Mammary epithelial cell (primary cell): ENCODE measurements at regions of chr1 and their contacts with region 1.

Region 1: DNA sequence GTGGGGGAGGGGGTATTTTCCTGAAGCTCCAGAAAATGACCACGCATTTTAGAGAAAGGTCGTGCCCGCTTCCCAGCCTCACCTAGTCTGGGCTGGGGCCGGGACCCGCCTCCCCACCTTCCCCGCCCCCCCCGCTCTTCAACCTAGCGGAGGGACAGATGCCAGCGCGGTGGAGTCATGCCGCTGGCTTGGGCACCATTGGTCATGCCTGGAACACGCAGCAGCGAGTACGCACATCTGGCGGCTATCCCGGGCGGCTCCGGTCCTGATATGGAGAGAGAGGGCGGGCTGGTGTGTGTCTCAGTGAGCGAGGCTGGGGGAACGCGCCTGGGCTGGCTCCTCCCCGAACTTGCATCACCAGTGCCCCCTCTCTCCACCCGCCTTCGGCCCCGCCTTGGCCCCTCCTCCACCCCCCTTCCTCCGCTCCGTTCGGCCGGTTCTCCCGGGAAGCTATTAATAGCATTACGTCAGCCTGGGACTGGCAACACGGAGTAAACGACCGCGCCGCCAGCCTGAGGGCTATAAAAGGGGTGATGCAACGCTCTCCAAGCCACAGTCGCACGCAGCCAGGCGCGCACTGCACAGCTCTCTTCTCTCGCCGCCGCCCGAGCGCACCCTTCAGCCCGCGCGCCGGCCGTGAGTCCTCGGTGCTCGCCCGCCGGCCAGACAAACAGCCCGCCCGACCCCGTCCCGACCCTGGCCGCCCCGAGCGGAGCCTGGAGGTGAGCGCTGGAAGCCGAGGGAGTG is at the start of gene ATF3:
- DNase-seq: peak; percentile 99
- H3K4me3 ChIP-seq: peak within 1 kb of the TSS; percentile 69 to 76 (median 75)
- H3K27ac ChIP-seq: peak within 1 kb of the TSS; percentile 89
- H3K4me1 ChIP-seq: peaks cover 24% of the 10 kb centered on the region
- H3K27me3 ChIP-seq: no peaks in the 10 kb centered on the region
- CTCF ChIP-seq: no peak
- total RNA-seq, gene ATF3: 3.5 to 17.8 TPM

Region 2: GRCh38 chr1:212488397-212489283 is 119.7 kb before region 1 on chr1:
- CTCF ChIA-PET with region 1: no interaction called
- dilution Hi-C with region 1: loop called (anchors 5 kb)
- in situ Hi-C with region 1: loop called in 1 of 2 experiments (anchors 5 kb)
- intact Hi-C with region 1: loop called (anchors 1 kb)
- DNase-seq: peak; percentile 96
- H3K4me3 ChIP-seq: no peak overlapping the region
- H3K27ac ChIP-seq: peak overlapping the region; percentile 33
- H3K4me1 ChIP-seq: peaks cover 24% of the 10 kb centered on the region
- H3K27me3 ChIP-seq: no peaks in the 10 kb centered on the region
- CTCF ChIP-seq: no peak

Region 3: GRCh38 chr1:212529211-212529741 is 79.1 kb before region 1 on chr1:
- CTCF ChIA-PET with region 1: no interaction called
- dilution Hi-C with region 1: no loop called
- in situ Hi-C with region 1: no loop called
- intact Hi-C with region 1: no loop called
- DNase-seq: peak; percentile 45
- H3K4me3 ChIP-seq: no peak overlapping the region
- H3K27ac ChIP-seq: no peak overlapping the region
- H3K4me1 ChIP-seq: peaks cover 15% of the 10 kb centered on the region
- H3K27me3 ChIP-seq: no peaks in the 10 kb centered on the region
- CTCF ChIP-seq: no peak

Region 4: GRCh38 chr1:212558693-212559480 is 49.5 kb before region 1 on chr1:
- CTCF ChIA-PET with region 1: interaction called, 3 read pairs
- dilution Hi-C with region 1: no loop called
- in situ Hi-C with region 1: no loop called
- intact Hi-C with region 1: loop called (anchors 1 kb)
- DNase-seq: peak; percentile 93
- H3K4me3 ChIP-seq: peak overlapping the region; percentile 59 to 78 (median 59)
- H3K27ac ChIP-seq: peak overlapping the region; percentile 88
- H3K4me1 ChIP-seq: peaks cover 6% of the 10 kb centered on the region
- H3K27me3 ChIP-seq: no peaks in the 10 kb centered on the region
- CTCF ChIP-seq: no peak

Region 5: DNA sequence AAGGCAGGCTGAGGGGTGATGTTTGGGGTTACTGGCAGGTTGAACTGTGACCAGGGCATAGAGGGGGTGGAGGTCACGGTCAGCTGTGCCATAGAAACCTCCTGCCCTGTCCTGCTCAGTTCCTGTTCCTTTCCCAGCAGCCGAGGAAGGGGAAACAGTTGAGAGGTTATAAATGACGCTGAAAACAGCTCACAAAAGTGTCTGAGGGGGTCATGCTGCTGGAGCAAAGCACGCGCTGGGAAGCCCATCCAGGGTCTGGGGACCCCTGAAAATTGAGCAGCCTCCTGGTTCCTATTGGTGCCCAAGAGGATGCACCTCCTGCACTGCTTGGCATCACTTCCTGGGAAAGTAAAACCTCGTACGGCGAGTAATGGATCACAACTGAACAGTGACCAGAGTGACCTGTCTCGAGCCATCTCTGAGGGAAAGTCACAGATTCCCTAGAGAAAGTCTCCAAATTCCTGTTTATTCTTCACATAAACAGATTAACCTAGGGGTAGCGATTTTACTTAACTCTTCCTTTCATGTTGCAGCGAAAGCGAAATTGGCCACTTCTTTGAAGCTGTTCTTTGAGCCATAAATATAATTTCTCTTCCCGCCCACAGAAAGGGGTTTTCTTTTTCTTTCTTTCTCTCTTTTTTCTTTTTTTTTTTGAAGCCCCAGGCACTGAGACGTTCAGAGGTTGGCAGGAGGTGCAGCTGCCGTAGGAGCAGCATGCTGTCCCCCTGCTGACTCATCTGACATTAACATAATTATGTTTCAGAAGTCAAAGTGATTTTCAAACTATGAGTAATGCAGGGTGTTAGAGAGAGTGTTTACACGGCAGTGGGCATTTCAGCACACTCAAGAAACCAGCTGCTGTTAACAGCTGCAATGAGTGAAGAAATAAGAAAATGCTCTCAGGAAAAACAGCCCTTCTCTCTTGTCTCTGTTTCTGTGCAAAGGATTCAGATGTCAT is 41.6 kb before region 1 on chr1:
- CTCF ChIA-PET with region 1: no interaction called
- dilution Hi-C with region 1: no loop called
- in situ Hi-C with region 1: no loop called
- intact Hi-C with region 1: loop called (anchors 2 kb)
- DNase-seq: peak; percentile 82
- H3K4me3 ChIP-seq: peak overlapping the region; percentile 45 to 62 (median 51)
- H3K27ac ChIP-seq: peak overlapping the region; percentile 69
- H3K4me1 ChIP-seq: peaks cover 12% of the 10 kb centered on the region
- H3K27me3 ChIP-seq: peaks cover 2% of the 10 kb centered on the region
- CTCF ChIP-seq: no peak

Region 6: DNA sequence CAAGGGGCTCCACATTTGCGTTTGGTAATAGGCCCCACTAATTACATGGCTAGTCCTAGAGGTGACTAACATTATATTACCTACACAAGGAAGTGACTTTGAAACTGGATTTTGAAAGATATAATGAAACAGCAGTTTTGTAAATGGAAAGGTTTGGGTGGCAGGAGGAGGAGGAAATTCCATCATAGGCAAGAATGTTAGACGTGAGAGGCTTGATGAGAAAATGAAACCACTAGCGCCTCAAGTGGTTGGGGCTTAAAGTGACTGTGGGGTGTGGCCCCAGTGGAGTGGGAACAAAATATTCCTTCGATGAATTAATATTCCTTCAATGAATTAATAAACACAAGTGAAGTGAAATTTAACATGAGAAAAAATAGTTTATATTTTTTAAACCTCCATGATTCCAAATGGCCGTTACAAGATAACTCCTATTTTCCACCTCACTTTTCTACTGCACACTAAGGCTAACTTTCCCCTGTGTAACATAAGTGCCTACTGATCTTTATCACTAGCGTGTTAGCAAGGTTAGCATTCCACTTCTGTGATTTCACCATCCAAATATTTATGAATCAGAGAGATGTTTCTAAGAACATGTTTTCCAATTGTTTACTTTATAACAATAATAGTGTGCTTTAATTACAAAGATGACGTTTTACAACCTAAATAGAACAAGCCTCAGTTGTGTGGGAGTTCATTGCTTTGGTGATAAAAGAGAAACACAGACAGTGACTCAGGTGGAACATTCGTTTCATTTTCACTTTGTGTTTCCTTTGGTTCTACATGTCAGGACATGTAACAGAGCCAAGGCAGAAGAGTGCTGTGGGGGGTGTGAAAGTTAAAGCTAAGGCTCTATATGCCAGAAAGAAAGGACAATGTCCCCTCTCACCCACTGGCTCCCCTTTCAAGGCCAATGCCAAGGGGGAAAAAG is 12.3 kb before region 1 on chr1:
- CTCF ChIA-PET with region 1: no interaction called
- dilution Hi-C with region 1: no loop called
- in situ Hi-C with region 1: no loop called
- intact Hi-C with region 1: loop called (anchors 1 kb)
- DNase-seq: peak; percentile 98
- H3K4me3 ChIP-seq: peak overlapping the region; percentile 2 to 7 (median 5)
- H3K27ac ChIP-seq: peak overlapping the region; percentile 95
- H3K4me1 ChIP-seq: peaks cover 27% of the 10 kb centered on the region
- H3K27me3 ChIP-seq: no peaks in the 10 kb centered on the region
- CTCF ChIP-seq: peak; percentile 75 to 81

Region 7: GRCh38 chr1:212630158-212630900 is 21.9 kb after region 1 on chr1:
- CTCF ChIA-PET with region 1: no interaction called
- dilution Hi-C with region 1: no loop called
- in situ Hi-C with region 1: no loop called
- intact Hi-C with region 1: no loop called
- DNase-seq: no peak
- H3K4me3 ChIP-seq: no peak overlapping the region
- H3K27ac ChIP-seq: no peak overlapping the region
- H3K4me1 ChIP-seq: no peaks in the 10 kb centered on the region
- H3K27me3 ChIP-seq: no peaks in the 10 kb centered on the region
- CTCF ChIP-seq: peak; percentile 77 to 82

Region 8: DNA sequence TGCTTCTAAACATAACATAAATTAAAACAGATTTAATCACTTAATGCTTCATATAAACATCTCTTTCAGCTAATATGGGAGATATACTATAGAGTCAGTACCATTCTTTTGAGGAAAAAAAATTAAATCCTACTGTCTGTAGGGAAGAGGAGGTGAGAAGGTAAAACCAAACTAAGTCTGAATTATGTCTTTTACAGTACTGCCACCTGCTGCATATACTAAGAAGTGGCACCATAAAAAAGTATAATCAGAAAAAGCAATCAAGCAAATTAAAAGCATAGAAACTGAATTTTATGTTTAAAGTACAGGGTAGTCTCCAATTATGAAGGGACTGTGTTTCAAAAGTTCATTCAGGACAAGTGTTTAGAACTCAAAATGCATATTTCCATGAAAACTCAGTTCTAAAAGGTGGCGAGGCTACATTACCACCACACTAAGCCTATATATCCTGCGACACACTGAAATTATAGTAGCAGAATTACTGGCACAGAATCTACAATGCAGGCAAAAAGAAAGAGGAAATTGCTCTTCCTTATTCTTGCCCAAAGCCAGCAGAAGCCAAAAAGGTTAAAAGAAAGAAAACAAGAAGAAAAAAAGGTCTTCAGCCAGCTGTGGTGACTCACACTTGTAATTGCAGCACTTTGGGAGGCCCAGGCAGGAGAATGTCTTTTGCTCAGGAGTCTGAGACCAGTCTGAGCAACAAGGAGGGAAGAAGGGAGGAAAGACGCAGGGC is 174.2 kb after region 1 on chr1:
- CTCF ChIA-PET with region 1: no interaction called
- dilution Hi-C with region 1: no loop called
- in situ Hi-C with region 1: no loop called
- intact Hi-C with region 1: loop called (anchors 5 kb)
- DNase-seq: peak; percentile 7
- H3K4me3 ChIP-seq: no peak overlapping the region
- H3K27ac ChIP-seq: no peak overlapping the region
- H3K4me1 ChIP-seq: no peaks in the 10 kb centered on the region
- H3K27me3 ChIP-seq: no peaks in the 10 kb centered on the region
- CTCF ChIP-seq: peak; percentile 52 to 57

Region 9: DNA sequence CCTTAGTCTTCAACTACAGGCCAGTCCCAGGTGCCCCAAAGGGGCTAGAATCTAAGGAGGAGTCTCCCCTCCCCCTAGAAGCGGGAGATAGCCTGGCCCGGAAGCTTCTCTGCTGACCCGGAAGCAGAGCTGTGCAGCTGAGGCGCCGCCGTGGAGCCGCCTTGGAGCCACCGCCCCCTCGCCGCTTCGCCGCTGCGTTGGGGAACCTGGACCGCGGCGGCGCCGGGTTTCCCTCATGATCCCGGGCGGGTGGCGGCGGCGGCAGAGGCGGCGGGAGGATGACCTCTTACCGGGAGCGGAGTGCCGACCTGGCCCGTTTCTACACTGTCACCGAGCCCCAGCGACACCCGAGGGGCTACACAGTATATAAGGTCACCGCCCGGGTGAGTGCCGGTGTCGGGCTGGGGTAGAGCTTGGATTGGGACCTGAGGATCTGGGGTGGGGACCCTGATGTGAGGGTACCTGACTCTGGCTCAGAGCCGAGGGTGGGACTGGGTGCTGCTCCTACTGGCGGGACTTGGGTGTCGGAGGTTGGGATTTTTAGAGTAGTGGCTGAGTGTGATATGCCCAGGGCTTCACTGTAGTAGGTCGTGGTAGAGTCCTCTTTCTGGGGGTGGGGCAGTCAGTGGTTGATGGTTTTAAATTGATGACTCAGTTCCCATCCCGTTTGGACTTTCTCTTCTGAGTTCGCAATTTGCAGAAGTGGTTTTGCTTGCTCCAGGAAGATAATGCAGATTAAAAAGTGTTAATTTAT is 442.9 kb after region 1 on chr1 and contains the start of gene RPS6KC1:
- CTCF ChIA-PET with region 1: no interaction called
- dilution Hi-C with region 1: no loop called
- in situ Hi-C with region 1: no loop called
- intact Hi-C with region 1: loop called (anchors 10 kb)
- DNase-seq: peak; percentile 78
- H3K4me3 ChIP-seq: peak within 1 kb of the TSS; percentile 96 to 98 (median 98)
- H3K27ac ChIP-seq: peak within 1 kb of the TSS; percentile 56
- H3K4me1 ChIP-seq: peaks cover 18% of the 10 kb centered on the region
- H3K27me3 ChIP-seq: no peaks in the 10 kb centered on the region
- CTCF ChIP-seq: no peak
- total RNA-seq, gene RPS6KC1: 17.2 to 23.8 TPM